Right ventricle myocardium inferior (tissue), 1 donor: ENCODE measurements at regions of chr13 and their contacts with region 1.

Region 1: GRCh38 chr13:32538621-32539246 is at the start of gene N4BP2L2:
- DNase-seq: peak; percentile 95
- ATAC-seq: peak; percentile 99
- total RNA-seq, gene N4BP2L2: 115 TPM

Region 2: GRCh38 chr13:32315238-32316027 is 223.3 kb before region 1 on chr13 and contains the starts of genes BRCA2 and ZAR1L:
- intact Hi-C with region 1: loop called (anchors 5 kb)
- DNase-seq: peak; percentile 98
- ATAC-seq: peak; percentile 97
- total RNA-seq, gene BRCA2: 0.87 TPM
- total RNA-seq, gene ZAR1L: not detected

Region 3: DNA sequence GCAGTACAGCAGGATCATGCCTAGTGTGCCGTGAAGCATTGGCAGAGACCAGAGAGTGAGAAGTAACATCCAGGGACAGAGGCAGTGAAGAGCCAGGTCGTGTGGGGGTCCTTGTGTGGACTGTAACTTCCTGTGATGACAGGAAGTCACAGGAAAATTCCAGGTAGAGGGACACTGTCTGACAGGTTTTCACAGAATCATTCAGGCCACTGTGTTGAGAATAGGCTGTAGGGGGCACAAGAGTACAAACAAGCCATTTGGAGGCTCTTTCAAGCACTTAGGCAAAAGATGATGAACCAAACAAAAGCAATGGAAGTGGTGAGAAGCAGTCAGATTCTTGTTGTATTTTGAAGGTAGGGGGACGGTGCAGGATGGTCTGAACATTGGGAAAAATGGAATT is 157.2 kb before region 1 on chr13:
- intact Hi-C with region 1: loop called (anchors 5 kb)
- DNase-seq: no peak
- ATAC-seq: peak; percentile 48

Region 4: GRCh38 chr13:32427852-32428580 is 110.7 kb before region 1 on chr13 and contains the start of gene N4BP2L1:
- intact Hi-C with region 1: loop called (anchors 5 kb)
- DNase-seq: peak; percentile 82
- ATAC-seq: peak; percentile 77
- total RNA-seq, gene N4BP2L1: 4.7 TPM